ENCODE measurements at regions of chr17 and their contacts with region 1.

Region 1: DNA sequence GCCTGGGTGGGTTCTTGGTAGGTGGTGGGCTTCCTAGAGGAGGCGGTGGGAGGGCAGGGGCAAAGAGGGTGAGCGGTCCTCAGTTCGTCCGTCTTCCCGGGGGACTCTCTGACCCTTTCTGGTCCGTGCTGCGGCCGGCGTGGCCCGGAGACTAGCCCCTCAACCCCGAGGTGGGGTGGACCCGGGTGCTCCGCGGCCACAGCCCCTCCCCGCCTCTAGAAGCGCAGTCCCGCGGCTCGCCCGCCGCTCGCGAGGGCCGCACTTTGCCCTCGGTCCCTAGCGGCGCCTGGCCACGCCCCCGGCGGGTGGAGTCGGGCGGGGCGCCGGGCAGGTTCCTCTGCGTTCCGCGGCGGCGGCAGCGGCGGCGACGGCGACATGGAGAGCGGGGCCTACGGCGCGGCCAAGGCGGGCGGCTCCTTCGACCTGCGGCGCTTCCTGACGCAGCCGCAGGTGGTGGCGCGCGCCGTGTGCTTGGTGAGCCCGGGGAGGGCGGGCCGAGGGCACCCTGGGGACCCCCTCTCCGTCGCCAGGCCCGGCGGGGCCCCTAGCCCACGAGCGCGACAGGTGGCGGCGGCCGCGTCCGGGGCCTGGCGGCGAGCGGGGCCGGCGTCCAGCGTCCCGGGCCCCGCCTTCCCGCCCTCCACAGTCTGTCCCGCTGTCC is at the start of gene SYNGR2:
- DNase-seq: peak; percentile 76 to 94 (median 88)
- ATAC-seq: peak; percentile 89
- H3K4me3 ChIP-seq: peak within 1 kb of the TSS; percentile 72
- H3K4me3 Mint-ChIP-seq: peak within 1 kb of the TSS; percentile 79
- H3K27ac ChIP-seq: peak within 1 kb of the TSS; percentile 71 to 74
- H3K27ac Mint-ChIP-seq: peak within 1 kb of the TSS; percentile 71
- H3K4me1 ChIP-seq: peaks cover 52% of the 10 kb centered on the region
- H3K4me1 Mint-ChIP-seq: peaks cover 36% of the 10 kb centered on the region
- H3K27me3 ChIP-seq: no peaks in the 10 kb centered on the region
- H3K27me3 Mint-ChIP-seq: no peaks in the 10 kb centered on the region
- CTCF ChIP-seq: no peak
- total RNA-seq, gene SYNGR2: 34.9 to 41.3 TPM

Region 2: GRCh38 chr17:78128551-78129350 is 39.6 kb before region 1 on chr17 and contains the start of gene TMC6:
- CTCF ChIA-PET with region 1: interaction called, 3 read pairs
- POLR2A ChIA-PET with region 1: interaction called, 12 read pairs
- intact Hi-C with region 1: loop called in 1 of 2 experiments (anchors 5 kb)
- DNase-seq: peak; percentile 58 to 89 (median 75)
- ATAC-seq: peak; percentile 43
- H3K4me3 ChIP-seq: peak within 1 kb of the TSS; percentile 94
- H3K4me3 Mint-ChIP-seq: peak within 1 kb of the TSS; percentile 100
- H3K27ac ChIP-seq: peak within 1 kb of the TSS; percentile 75 to 92
- H3K27ac Mint-ChIP-seq: peak within 1 kb of the TSS; percentile 96
- H3K4me1 ChIP-seq: peaks cover 76% of the 10 kb centered on the region
- H3K4me1 Mint-ChIP-seq: peaks cover 56% of the 10 kb centered on the region
- H3K27me3 ChIP-seq: no peaks in the 10 kb centered on the region
- H3K27me3 Mint-ChIP-seq: no peaks in the 10 kb centered on the region
- CTCF ChIP-seq: no peak
- total RNA-seq, gene TMC6: 645 to 659 TPM

Region 3: DNA sequence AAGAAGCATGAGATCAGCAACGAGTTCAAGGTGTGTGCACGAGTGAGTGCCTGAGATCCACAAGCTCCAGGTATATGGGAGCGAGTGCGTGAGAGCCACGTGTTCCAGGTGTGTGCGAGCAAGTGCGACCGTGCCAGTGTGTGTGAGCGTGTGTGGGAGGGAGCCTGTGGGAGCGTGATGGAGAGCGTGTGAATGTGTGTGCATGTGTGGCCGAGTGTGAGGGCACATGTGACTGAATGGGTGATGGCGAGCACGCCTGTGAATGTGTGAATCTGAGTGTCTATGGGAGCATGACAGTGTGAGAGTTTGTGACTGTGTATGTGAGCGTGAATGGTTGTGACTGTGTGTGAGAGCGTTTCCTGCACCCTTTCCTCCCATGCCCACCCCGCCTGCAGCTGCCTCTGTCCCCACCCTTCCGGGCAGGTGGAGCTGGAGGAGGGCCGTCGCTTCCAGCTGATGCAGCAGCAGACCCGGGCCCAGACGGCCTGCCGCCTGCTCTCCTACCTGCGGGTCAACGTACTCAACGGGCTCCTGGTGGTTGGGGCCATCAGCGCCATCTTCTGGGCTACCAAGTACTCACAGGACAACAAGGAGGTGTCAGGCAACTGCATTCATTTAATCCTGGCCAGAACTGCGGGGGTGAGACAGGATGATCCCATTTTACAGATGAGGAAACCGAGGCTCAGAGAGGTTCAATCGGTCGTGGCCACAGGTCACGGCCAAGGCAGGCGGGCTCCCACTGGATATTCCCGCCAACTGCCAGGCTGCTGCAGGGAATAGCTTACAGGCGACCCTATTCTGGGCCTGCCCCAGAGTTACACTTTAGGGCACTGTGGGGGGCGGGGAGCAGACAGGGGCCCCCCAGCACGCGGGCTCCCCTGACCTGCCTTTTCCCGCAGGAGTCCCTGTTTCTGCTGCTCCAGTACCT is 34.1 kb before region 1 on chr17:
- CTCF ChIA-PET with region 1: no interaction called
- POLR2A ChIA-PET with region 1: interaction called, 12 read pairs
- intact Hi-C with region 1: loop called in 1 of 2 experiments (anchors 5 kb)
- DNase-seq: peak; percentile 71 to 93 (median 78)
- ATAC-seq: peak; percentile 34
- H3K4me3 ChIP-seq: peak overlapping the region; percentile 94
- H3K4me3 Mint-ChIP-seq: peak overlapping the region; percentile 88
- H3K27ac ChIP-seq: peak overlapping the region; percentile 7 to 92
- H3K27ac Mint-ChIP-seq: peak overlapping the region; percentile 81
- H3K4me1 ChIP-seq: peaks cover 90% of the 10 kb centered on the region
- H3K4me1 Mint-ChIP-seq: peaks cover 80% of the 10 kb centered on the region
- H3K27me3 ChIP-seq: no peaks in the 10 kb centered on the region
- H3K27me3 Mint-ChIP-seq: no peaks in the 10 kb centered on the region
- CTCF ChIP-seq: peak; percentile 75

Region 4: DNA sequence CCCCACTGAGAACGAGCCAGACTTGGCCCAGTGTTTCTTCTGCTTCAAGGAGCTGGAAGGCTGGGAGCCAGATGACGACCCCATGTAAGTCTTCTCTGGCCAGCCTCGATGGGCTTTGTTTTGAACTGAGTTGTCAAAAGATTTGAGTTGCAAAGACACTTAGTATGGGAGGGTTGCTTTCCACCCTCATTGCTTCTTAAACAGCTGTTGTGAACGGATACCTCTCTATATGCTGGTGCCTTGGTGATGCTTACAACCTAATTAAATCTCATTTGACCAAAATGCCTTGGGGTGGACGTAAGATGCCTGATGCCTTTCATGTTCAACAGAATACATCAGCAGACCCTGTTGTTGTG is 46.3 kb after region 1 on chr17:
- CTCF ChIA-PET with region 1: no interaction called
- POLR2A ChIA-PET with region 1: no interaction called
- intact Hi-C with region 1: loop called in 1 of 2 experiments (anchors 2 kb)
- DNase-seq: no peak
- ATAC-seq: no peak
- H3K4me3 ChIP-seq: peak overlapping the region; percentile 58
- H3K4me3 Mint-ChIP-seq: no peak overlapping the region
- H3K27ac ChIP-seq: no peak overlapping the region
- H3K27ac Mint-ChIP-seq: no peak overlapping the region
- H3K4me1 ChIP-seq: peaks cover 13% of the 10 kb centered on the region
- H3K4me1 Mint-ChIP-seq: no peaks in the 10 kb centered on the region
- H3K27me3 ChIP-seq: no peaks in the 10 kb centered on the region
- H3K27me3 Mint-ChIP-seq: no peaks in the 10 kb centered on the region
- CTCF ChIP-seq: no peak

Region 5: DNA sequence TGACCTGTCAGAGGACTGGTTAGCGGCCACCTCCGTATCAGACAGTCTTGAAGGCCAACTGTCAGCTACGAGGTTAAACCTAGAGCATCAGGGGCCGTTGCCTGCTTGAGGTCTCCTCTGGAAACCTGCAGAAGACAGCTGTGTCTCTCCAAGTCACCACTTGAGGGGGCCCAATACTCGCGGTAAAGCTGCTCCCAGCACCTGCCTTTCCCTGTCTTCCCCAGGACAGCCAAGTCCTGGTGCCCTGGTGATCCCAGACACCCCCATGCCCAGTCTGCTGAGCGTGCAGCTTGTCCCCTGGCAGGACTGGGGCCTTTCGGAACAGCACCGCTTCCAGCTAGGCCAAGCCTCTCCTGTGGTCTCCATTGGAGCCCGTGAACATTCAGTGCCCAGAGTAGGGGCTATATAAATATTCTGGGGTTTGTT is 328.8 kb after region 1 on chr17:
- CTCF ChIA-PET with region 1: no interaction called
- POLR2A ChIA-PET with region 1: no interaction called
- intact Hi-C with region 1: no loop called
- DNase-seq: peak; percentile 10 to 78 (median 46)
- ATAC-seq: peak; percentile 76
- H3K4me3 ChIP-seq: no peak overlapping the region
- H3K4me3 Mint-ChIP-seq: no peak overlapping the region
- H3K27ac ChIP-seq: no peak overlapping the region
- H3K27ac Mint-ChIP-seq: no peak overlapping the region
- H3K4me1 ChIP-seq: no peaks in the 10 kb centered on the region
- H3K4me1 Mint-ChIP-seq: no peaks in the 10 kb centered on the region
- H3K27me3 ChIP-seq: no peaks in the 10 kb centered on the region
- H3K27me3 Mint-ChIP-seq: no peaks in the 10 kb centered on the region
- CTCF ChIP-seq: peak; percentile 63

Region 6: GRCh38 chr17:79391808-79392233 is 1223.4 kb after region 1 on chr17:
- CTCF ChIA-PET with region 1: no interaction called
- POLR2A ChIA-PET with region 1: no interaction called
- intact Hi-C with region 1: no loop called
- DNase-seq: peak; percentile 42 to 81 (median 56)
- ATAC-seq: peak; percentile 59
- H3K4me3 ChIP-seq: no peak overlapping the region
- H3K4me3 Mint-ChIP-seq: no peak overlapping the region
- H3K27ac ChIP-seq: no peak overlapping the region
- H3K27ac Mint-ChIP-seq: no peak overlapping the region
- H3K4me1 ChIP-seq: peaks cover 7% of the 10 kb centered on the region
- H3K4me1 Mint-ChIP-seq: no peaks in the 10 kb centered on the region
- H3K27me3 ChIP-seq: peaks cover 24 to 28% of the 10 kb centered on the region in 2 experiments
- H3K27me3 Mint-ChIP-seq: peaks cover 65% of the 10 kb centered on the region
- CTCF ChIP-seq: peak; percentile 89

Measured in CD4-positive, alpha-beta T cell (primary cell).